Psoas muscle (tissue), 8 donors: ENCODE measurements at regions of chr11 and their contacts with region 1.

Region 1: DNA sequence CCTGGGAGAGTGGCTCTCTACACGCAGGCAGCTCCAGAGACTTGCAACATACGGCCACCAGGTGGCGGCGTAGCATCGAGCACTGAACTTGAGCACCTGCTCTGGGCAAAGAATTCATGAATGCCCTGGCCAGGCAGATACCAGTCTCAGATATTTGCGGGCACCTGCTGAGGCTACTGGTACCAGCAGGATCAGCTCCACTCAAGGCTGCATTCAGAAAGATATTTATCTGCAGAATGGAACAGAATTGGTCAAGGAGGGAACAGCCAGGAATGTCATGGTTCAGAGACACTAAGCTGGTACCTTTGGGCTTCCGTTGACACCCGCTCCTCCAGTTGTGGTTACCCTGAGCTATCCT is 10.8 kb upstream of the CCDC86 start:
- DNase-seq: peak; percentile 86 to 89
- ATAC-seq: peak; percentile 91 to 99 (median 98)
- H3K4me3 ChIP-seq: no peak overlapping the region
- H3K27ac ChIP-seq: no peak overlapping the region
- H3K4me1 ChIP-seq: peaks cover 7% of the 10 kb centered on the region
- H3K27me3 ChIP-seq: no peaks in the 10 kb centered on the region
- CTCF ChIP-seq: peak; percentile 98

Region 2: GRCh38 chr11:60889869-60890333 is 58.8 kb after region 1 on chr11:
- intact Hi-C with region 1: loop called (anchors 2 to 5 kb)
- DNase-seq: no peak
- ATAC-seq: no peak
- H3K4me3 ChIP-seq: no peak overlapping the region
- H3K27ac ChIP-seq: no peak overlapping the region
- H3K4me1 ChIP-seq: no peaks in the 10 kb centered on the region
- H3K27me3 ChIP-seq: no peaks in the 10 kb centered on the region
- CTCF ChIP-seq: no peak

Region 3: DNA sequence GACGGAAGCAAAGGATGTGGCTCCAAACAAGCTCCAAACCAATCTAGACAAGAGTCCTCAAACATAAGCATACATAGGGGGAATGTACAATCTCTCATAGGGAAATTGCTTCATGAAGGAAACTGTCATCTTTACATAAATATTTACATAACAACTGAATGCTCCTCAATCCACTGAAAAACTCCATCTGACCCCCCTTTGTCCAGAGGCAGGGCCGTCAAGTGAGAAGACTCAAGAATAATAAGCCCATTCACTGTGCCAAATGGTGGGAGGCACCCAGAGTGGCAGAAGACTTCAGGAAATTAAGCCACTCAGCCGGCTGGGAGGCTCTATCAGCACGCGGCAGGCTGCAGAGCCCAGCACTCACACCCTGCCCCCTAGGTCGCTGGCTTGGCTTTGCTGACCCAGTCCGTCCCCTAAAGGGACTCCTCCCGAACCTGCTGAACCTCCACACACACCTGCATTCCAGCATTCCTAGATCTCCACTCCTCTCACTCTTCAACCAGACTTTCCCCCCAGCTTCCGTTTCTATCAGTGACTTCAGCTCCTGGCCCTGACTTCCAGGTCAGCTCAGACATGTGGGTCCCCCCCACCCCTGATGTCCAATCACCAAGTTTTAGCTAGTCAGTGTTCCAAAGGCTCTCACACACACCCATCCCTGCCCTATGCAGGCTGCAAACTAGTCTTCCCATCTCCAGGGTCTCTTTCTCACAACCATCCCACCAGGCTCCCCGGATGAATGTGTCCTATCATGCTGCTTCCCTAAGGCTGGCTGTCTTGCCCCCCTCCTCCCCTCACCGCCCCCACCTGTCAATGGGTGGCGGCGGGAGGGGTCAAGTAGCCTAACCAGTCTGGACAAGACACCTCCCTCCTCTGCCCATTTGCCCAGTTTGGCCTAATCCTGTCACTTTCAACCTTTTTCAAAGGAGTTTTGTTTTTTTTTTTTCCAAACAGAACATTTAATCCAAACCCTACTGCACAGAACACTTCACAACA is 318.8 kb after region 1 on chr11:
- intact Hi-C with region 1: no loop called
- DNase-seq: no peak
- ATAC-seq: no peak
- H3K4me3 ChIP-seq: no peak overlapping the region
- H3K27ac ChIP-seq: no peak overlapping the region
- H3K4me1 ChIP-seq: peaks cover 48% of the 10 kb centered on the region
- H3K27me3 ChIP-seq: no peaks in the 10 kb centered on the region
- CTCF ChIP-seq: no peak

Region 4: GRCh38 chr11:61187505-61188130 is 356.5 kb after region 1 on chr11:
- intact Hi-C with region 1: loop called (anchors 5 kb)
- DNase-seq: peak; percentile 69 to 72
- ATAC-seq: peak; percentile 79 to 89 (median 84)
- H3K4me3 ChIP-seq: no peak overlapping the region
- H3K27ac ChIP-seq: no peak overlapping the region
- H3K4me1 ChIP-seq: no peaks in the 10 kb centered on the region
- H3K27me3 ChIP-seq: peaks cover 0 to 3% (median 0%) of the 10 kb centered on the region in 3 donors
- CTCF ChIP-seq: peak; percentile 93